ENCODE measurements at regions of chr10 and their contacts with region 1.

Region 1: GRCh38 chr10:24724381-24725228 is 918 bp upstream of the ARHGAP21 start:
- DNase-seq: peak; percentile 98 to 99 (median 99)
- H3K4me3 ChIP-seq: peak overlapping the region; percentile 63 to 93 (median 85)
- H3K27ac ChIP-seq: peak overlapping the region; percentile 92 to 100 (median 99)
- H3K27me3 ChIP-seq: no peaks in the 10 kb centered on the region
- CTCF ChIP-seq: peak in 7 of 56 donors; percentile 0 to 33 (median 9)

Region 2: DNA sequence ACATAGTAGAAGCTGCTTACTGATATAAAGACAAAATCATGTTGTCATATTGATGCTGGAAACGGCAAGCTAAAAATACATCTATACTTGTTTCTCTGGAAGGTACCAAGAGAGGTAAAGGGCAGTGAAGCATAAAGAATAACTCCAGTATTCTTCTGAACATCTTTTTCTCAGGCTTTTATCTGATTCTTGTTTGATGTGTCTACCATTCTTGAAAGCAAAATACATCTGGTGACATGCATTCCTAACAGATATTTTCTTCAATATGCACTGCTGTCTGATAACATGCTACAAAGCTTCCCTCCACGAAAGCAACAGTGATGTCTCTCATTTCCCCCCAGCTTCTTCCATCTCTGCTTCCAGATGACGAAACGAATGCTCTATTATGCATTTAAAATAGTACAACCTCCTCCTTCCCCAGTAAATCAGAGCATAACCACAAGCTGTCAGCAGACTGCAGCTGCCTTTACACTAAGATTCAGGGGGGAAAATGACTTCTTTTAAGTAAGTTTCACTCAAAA is 101.8 kb before region 1 on chr10:
- intact Hi-C with region 1: loop called in 1 of 2 experiments (anchors 5 kb)
- DNase-seq: peak in 1 of 10 donors; percentile 12
- H3K4me3 ChIP-seq: peak overlapping the region; percentile 4 to 64 (median 48)
- H3K27ac ChIP-seq: peak overlapping the region in 57 of 59 donors; percentile 21 to 88 (median 75)
- H3K27me3 ChIP-seq: no peaks in the 10 kb centered on the region
- CTCF ChIP-seq: no peak

Region 3: GRCh38 chr10:24784061-24784460 is 59.5 kb after region 1 on chr10:
- intact Hi-C with region 1: loop called (anchors 2 kb)
- DNase-seq: peak; percentile 28 to 96 (median 89)
- H3K4me3 ChIP-seq: peak overlapping the region in 18 of 59 donors; percentile 7 to 52 (median 20)
- H3K27ac ChIP-seq: peak overlapping the region; percentile 72 to 99 (median 93)
- H3K27me3 ChIP-seq: no peaks in the 10 kb centered on the region
- CTCF ChIP-seq: peak in 6 of 56 donors; percentile 14 to 51 (median 23)

Region 4: DNA sequence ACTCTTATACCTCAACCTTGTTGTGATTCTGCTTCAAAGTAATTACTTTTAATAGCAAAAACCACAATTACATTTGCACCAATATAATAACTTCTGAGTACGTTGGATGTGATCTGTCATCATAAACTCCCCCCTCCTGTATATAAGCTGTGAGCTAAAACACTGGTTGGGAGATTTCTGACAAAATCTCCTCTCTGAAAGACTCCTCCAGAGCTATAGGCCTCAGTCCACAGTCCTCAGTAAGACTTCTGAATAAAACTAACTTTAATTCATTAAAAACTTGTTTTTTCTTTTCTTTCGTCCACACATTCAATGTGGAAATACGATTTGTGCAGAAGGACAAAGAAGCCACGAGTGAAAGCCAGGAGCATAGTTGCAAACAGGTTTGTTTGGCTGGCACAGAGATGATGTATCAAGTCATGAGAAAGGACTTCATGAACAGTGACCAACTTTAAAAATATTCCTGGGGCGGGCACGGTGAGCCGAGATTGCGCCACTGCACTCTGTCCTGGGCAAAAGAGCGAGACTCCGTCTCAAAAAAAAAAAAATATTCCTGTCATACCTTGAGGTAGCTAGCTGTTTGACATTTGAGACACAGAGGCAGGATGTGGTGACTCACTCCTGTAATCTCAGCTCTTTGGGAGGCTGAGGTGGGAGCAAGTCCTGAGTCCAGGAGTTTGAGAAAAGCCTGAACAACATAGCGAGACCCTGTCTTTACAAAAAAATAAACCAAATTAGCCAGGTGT is 90.1 kb after region 1 on chr10:
- intact Hi-C with region 1: loop called (anchors 2 to 5 kb)
- DNase-seq: no peak
- H3K4me3 ChIP-seq: no peak overlapping the region
- H3K27ac ChIP-seq: peak overlapping the region in 20 of 59 donors; percentile 6 to 100 (median 96)
- H3K27me3 ChIP-seq: no peaks in the 10 kb centered on the region
- CTCF ChIP-seq: no peak

Region 5: GRCh38 chr10:24952707-24953645 is 228.4 kb after region 1 on chr10:
- intact Hi-C with region 1: loop called (anchors 2 kb)
- DNase-seq: peak in 8 of 10 donors; percentile 36 to 57 (median 45)
- H3K4me3 ChIP-seq: peak overlapping the region; percentile 53 to 85 (median 73)
- H3K27ac ChIP-seq: peak overlapping the region; percentile 88 to 100 (median 98)
- H3K27me3 ChIP-seq: no peaks in the 10 kb centered on the region
- CTCF ChIP-seq: peak in 48 of 56 donors; percentile 7 to 81 (median 50)

Region 6: DNA sequence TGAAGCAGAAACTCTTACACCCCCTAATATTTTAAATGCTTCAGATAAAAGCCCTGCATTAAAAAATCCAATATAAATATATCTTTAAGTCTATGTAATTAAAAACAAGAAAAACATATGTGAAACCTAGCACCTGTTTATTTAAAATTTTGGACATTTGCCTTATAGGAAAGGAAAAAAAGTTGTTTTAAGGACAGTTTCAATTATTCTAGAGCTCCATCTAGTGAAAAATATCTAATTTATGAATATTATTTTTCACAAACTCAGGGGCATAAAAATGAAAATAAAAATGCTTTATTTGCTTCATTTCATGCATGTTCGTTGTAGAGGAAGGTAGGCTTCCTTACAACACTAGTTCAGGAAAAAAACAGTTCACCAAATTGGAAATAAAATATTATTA is 265.3 kb after region 1 on chr10:
- intact Hi-C with region 1: loop called in 1 of 2 experiments (anchors 10 kb)
- DNase-seq: no peak
- H3K4me3 ChIP-seq: no peak overlapping the region
- H3K27ac ChIP-seq: peak overlapping the region in 23 of 59 donors; percentile 1 to 79 (median 65)
- H3K27me3 ChIP-seq: no peaks in the 10 kb centered on the region
- CTCF ChIP-seq: peak in 54 of 56 donors; percentile 20 to 78 (median 54)

Region 7: DNA sequence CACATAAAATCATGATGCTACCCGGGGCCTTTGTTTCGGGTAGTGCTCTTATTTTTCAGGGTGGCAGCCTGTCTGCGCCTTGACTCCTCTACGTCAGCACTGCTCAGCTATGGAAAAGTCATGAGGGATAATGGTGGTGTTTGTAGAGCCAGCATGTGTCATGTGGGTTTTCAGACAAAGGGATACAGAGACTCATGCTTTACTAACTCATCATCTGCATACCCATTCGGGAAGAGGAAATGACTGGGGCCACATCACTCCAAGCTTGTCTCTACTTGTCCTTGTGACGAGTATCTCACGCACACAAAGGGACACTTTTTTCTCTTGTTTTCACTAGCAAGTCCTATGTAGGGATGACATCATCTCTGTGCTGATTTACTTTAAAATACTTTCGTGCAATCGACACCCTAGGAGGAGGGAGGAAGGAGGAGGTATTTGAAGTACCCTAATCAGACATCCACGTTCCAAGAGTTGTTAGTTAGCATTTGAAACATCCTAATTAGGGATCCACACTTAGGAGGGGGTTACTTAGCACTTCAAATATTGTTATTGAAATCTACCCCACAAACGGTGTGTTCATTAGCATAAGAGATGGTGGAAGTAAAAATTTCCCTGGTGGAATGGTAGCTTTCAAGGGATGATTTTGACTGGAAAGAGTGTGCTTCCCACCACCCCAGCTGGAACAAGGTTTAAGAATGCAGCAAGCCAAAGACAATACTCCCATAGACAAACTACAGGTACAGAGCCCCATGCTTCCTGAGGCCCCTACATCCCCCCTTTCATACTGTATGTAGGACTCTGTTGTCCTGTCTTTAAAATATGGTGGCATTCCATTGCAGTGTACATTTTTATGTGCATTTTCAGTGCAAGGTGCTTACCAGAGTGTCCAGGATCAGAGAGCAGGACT is 343.8 kb after region 1 on chr10:
- intact Hi-C with region 1: no loop called
- DNase-seq: peak in 1 of 10 donors; percentile 63
- H3K4me3 ChIP-seq: peak overlapping the region in 1 of 59 donors; percentile 17
- H3K27ac ChIP-seq: peak overlapping the region in 27 of 59 donors; percentile 15 to 73 (median 44)
- H3K27me3 ChIP-seq: no peaks in the 10 kb centered on the region
- CTCF ChIP-seq: no peak

Region 8: GRCh38 chr10:25080880-25081581 is 356.4 kb after region 1 on chr10:
- intact Hi-C with region 1: loop called in 1 of 2 experiments (anchors 5 kb)
- DNase-seq: peak; percentile 63 to 90 (median 84)
- H3K4me3 ChIP-seq: peak overlapping the region in 10 of 59 donors; percentile 2 to 30 (median 18)
- H3K27ac ChIP-seq: peak overlapping the region in 28 of 59 donors; percentile 1 to 81 (median 42)
- H3K27me3 ChIP-seq: no peaks in the 10 kb centered on the region
- CTCF ChIP-seq: peak; percentile 81 to 99 (median 90)

Region 9: DNA sequence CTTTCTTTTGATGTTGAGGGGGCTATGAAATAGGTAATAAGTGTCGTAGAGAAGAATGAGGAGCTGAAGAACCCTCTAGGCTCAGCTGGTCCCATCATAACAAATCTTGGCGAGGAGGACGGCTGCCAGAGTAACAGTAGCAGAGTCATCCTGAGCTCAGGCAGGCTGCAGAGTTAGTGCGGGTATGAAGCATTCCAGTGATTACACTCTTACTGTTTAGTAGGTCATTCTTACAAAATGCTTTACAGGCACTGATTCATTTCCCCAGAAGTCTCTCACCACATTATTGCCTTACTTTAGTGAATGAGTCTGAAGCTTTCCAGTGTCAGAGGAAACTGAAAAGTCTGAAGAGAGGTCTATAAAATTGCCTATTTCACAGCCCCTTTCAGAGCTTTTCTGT is 406.3 kb after region 1 on chr10:
- intact Hi-C with region 1: no loop called
- DNase-seq: peak in 1 of 10 donors; percentile 45
- H3K4me3 ChIP-seq: no peak overlapping the region
- H3K27ac ChIP-seq: no peak overlapping the region
- H3K27me3 ChIP-seq: no peaks in the 10 kb centered on the region
- CTCF ChIP-seq: no peak

Measured in dorsolateral prefrontal cortex (tissue), 120 donors.